Activated naive CD8-positive, alpha-beta T cell treated with anti-CD3 and anti-CD28 coated beads, Interleukin-2, amount 10 ng/mL, durations not matched to agents 7 days and 5 days (primary cell): ENCODE measurements at regions of chr6 and their contacts with region 1.

Region 1: GRCh38 chr6:710601-711571 is 17.9 kb upstream of the EXOC2 start:
- DNase-seq: peak; percentile 76
- ATAC-seq: peak; percentile 84
- H3K4me3 Mint-ChIP-seq: peak overlapping the region; percentile 90
- H3K27ac Mint-ChIP-seq: peak overlapping the region; percentile 98
- H3K4me1 Mint-ChIP-seq: peaks cover 19% of the 10 kb centered on the region
- H3K27me3 Mint-ChIP-seq: no peaks in the 10 kb centered on the region

Region 2: GRCh38 chr6:692855-693722 is 17.8 kb before region 1 on chr6 and contains the start of gene EXOC2:
- POLR2A ChIA-PET with region 1: interaction called, 29 read pairs
- DNase-seq: peak; percentile 91
- ATAC-seq: peak; percentile 74
- H3K4me3 Mint-ChIP-seq: peak within 1 kb of the TSS; percentile 97
- H3K27ac Mint-ChIP-seq: peak within 1 kb of the TSS; percentile 96
- H3K4me1 Mint-ChIP-seq: peaks cover 27% of the 10 kb centered on the region
- H3K27me3 Mint-ChIP-seq: no peaks in the 10 kb centered on the region
- total RNA-seq, gene EXOC2: 31.9 to 35.4 TPM

Region 3: DNA sequence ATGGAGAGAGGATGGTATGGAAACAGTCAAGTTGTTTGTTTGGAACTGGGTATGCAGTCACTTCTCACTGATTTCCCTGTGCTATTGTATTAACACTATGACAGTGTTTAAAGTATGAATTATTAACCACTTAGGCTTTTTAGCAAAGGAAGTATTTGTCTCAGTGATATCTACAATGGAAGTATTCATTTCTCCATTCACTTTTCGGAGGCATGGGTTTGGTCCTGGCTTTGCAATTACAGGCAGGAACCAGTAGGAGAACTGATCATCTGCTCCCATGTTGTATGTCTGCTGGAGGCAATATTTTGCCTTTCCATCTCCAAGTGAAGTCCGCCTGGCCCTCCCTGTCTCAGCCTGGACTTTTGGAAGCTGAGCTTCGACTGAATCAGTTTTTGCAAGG is 12.7 kb after region 1 on chr6:
- POLR2A ChIA-PET with region 1: no interaction called
- DNase-seq: no peak
- ATAC-seq: no peak
- H3K4me3 Mint-ChIP-seq: no peak overlapping the region
- H3K27ac Mint-ChIP-seq: no peak overlapping the region
- H3K4me1 Mint-ChIP-seq: peaks cover 4% of the 10 kb centered on the region
- H3K27me3 Mint-ChIP-seq: peaks cover 10% of the 10 kb centered on the region

Region 4: GRCh38 chr6:733431-734219 is 22.7 kb after region 1 on chr6:
- POLR2A ChIA-PET with region 1: no interaction called
- DNase-seq: no peak
- ATAC-seq: no peak
- H3K4me3 Mint-ChIP-seq: no peak overlapping the region
- H3K27ac Mint-ChIP-seq: no peak overlapping the region
- H3K4me1 Mint-ChIP-seq: no peaks in the 10 kb centered on the region
- H3K27me3 Mint-ChIP-seq: peaks cover 28% of the 10 kb centered on the region